ENCODE measurements at regions of chr7 and their contacts with region 1.

Region 1: DNA sequence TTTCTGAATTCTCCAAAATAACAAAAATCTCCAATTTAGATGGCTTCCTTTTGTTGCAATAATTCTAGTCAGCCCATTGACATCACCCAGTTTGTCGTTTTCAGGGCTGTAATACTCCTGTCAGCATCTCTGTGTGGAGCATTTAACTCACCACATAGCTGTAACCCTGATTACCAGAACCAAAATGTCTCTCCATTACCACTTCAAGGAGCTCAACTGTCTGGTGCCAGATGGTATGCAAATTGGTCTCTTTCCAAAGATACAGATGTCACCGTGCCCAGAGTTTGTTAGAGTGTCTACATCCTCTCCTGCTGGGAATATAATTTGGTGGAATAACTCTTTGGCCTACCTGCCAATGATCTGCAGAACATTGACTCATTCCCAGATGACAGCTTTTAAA is 350.3 kb upstream of the POT1 start:
- DNase-seq: peak; percentile 0
- H3K4me3 ChIP-seq: no peak overlapping the region
- CTCF ChIP-seq: no peak

Region 2: DNA sequence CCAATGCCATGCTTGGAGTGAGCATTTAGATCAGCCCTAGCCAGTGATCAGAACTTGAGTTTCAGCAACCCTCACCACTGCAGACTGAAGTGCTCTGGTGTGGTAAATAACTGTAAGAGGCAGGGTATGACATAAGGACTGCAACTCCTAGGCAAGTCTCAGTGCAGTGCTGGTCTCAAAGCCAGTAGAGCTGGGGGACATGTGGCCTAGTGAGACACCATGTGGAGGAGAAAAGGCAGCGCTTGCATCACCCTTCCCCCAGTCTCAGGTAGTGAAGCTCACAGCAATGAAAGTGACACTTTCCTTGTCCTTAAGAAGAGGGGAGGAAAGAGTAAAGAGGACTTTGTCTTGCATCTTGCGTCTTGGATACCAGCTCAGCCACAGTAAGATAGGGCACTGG is 36.5 kb after region 1 on chr7:
- in situ Hi-C with region 1: loop called (anchors 5 kb)
- DNase-seq: no peak
- H3K4me3 ChIP-seq: no peak overlapping the region
- CTCF ChIP-seq: no peak